ENCODE measurements at regions of chr17 and their contacts with region 1.

Region 1: GRCh38 chr17:75978938-75979704 is at the starts of genes ACOX1 and TEN1:
- DNase-seq: peak; percentile 80
- ATAC-seq: peak; percentile 98
- H3K4me3 ChIP-seq: peak within 1 kb of the TSS; percentile 87
- H3K27ac ChIP-seq: peak within 1 kb of the TSS; percentile 99
- H3K4me1 ChIP-seq: peaks cover 6% of the 10 kb centered on the region
- H3K27me3 ChIP-seq: no peaks in the 10 kb centered on the region
- CTCF ChIP-seq: peak; percentile 7 to 32 (median 13); a peak in 3 of 6 replicates
- EP300 ChIP-seq: peak in 1 of 2 experiments; percentile 33; a peak in 1 of 4 replicates
- POLR2A ChIP-seq: peak; percentile 83
- RAD21 ChIP-seq: no peak
- polyA plus RNA-seq, gene ACOX1: 6.5 to 12.3 TPM
- polyA plus RNA-seq, gene TEN1: 1.1 to 5.4 TPM

Region 2: GRCh38 chr17:75991401-75991800 is 12.3 kb after region 1 on chr17:
- CTCF ChIA-PET with region 1: interaction called, 7 read pairs
- POLR2A ChIA-PET with region 1: interaction called, 24 read pairs
- RAD21 ChIA-PET with region 1: interaction called, 10 read pairs
- SMC1A ChIA-PET with region 1: interaction called, 9 read pairs
- in situ Hi-C with region 1: no loop called
- intact Hi-C with region 1: no loop called
- DNase-seq: no peak
- ATAC-seq: no peak
- H3K4me3 ChIP-seq: no peak overlapping the region
- H3K27ac ChIP-seq: no peak overlapping the region
- H3K4me1 ChIP-seq: peaks cover 15% of the 10 kb centered on the region; the same call in 1 of the 2 replicates
- H3K27me3 ChIP-seq: no peaks in the 10 kb centered on the region
- CTCF ChIP-seq: no peak
- EP300 ChIP-seq: no peak
- POLR2A ChIP-seq: no peak
- RAD21 ChIP-seq: no peak

Region 3: DNA sequence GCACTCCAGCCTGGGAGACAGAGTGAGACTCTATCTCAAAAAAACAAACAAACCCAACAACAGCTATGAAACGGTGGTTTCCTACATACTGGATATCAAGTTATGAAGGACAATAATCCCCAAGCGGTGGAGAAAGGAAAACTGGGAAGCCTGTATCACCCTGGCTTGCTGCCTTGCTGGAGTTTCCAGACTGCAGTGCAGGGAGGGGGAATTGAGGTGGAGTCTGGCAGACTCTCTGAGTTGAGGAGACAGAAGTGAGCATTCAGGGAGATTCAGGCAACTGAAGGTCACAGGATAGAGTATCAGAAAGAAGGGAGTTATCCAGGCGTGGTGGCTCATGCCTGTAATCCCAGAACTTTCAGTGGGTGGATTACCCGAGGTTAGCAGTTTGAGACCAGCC is 317.1 kb after region 1 on chr17:
- CTCF ChIA-PET with region 1: no interaction called
- POLR2A ChIA-PET with region 1: no interaction called
- RAD21 ChIA-PET with region 1: no interaction called
- SMC1A ChIA-PET with region 1: no interaction called
- in situ Hi-C with region 1: no loop called
- intact Hi-C with region 1: no loop called
- DNase-seq: no peak
- ATAC-seq: no peak
- H3K4me3 ChIP-seq: no peak overlapping the region
- H3K27ac ChIP-seq: no peak overlapping the region
- H3K4me1 ChIP-seq: no peaks in the 10 kb centered on the region
- H3K27me3 ChIP-seq: no peaks in the 10 kb centered on the region
- CTCF ChIP-seq: no peak
- EP300 ChIP-seq: no peak
- POLR2A ChIP-seq: no peak
- RAD21 ChIP-seq: no peak